Activated T-helper 2 cell treated with anti-CD3 and anti-CD28 coated beads, Interferon-gamma antibody, Interleukin-2, Interleukin-4, amounts not matched to agents 10 μg/mL and 5 μg/mL and 100 μg/mL, durations not matched to agents 14 hours and 24 hours and 36 hours (primary cell): ENCODE measurements at regions of chr6 and their contacts with region 1.

Region 1: GRCh38 chr6:135647521-135647920 is 150.0 kb upstream of the AHI1 start:
- DNase-seq: no peak
- H3K4me3 Mint-ChIP-seq: peak overlapping the region; percentile 92
- H3K27ac Mint-ChIP-seq: peak overlapping the region; percentile 97
- H3K4me1 Mint-ChIP-seq: peaks cover 58% of the 10 kb centered on the region
- H3K27me3 Mint-ChIP-seq: no peaks in the 10 kb centered on the region

Region 2: DNA sequence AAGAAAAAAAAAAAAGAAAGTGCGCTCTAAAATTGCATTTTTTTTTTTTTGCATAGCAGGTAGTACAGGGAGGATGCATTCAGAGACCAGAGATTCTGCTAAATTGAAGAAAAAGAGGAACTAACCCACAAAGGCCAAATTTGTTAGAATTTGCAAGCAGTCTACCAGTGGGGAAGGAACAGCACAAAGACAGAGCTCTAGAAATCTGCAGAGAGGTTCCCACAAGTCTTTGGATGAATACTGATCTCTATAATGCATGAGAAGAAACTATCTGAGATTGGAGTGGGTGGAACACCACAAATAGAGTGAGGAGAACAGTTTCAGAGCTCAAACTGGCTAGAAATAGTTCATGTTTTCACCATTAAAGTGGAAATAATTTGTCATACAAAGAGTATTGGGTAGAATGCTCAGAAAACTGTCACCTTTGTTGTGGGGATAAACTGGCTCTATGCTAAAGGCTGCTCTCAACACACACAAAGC is 70.4 kb before region 1 on chr6:
- intact Hi-C with region 1: loop called (anchors 2 kb)
- DNase-seq: no peak
- H3K4me3 Mint-ChIP-seq: peak overlapping the region; percentile 39
- H3K27ac Mint-ChIP-seq: peak overlapping the region; percentile 99
- H3K4me1 Mint-ChIP-seq: peaks cover 57% of the 10 kb centered on the region
- H3K27me3 Mint-ChIP-seq: no peaks in the 10 kb centered on the region